Ovary (tissue), 10 donors: ENCODE measurements at regions of chr9 and their contacts with region 1.

Region 1: GRCh38 chr9:13291718-13292117 is 12.2 kb upstream of the MPDZ start:
- DNase-seq: no peak
- H3K4me3 ChIP-seq: no peak overlapping the region
- H3K27ac ChIP-seq: no peak overlapping the region
- H3K4me1 ChIP-seq: no peaks in the 10 kb centered on the region
- H3K27me3 ChIP-seq: no peaks in the 10 kb centered on the region
- CTCF ChIP-seq: no peak
- EP300 ChIP-seq: no peak
- POLR2A ChIP-seq: no peak

Region 2: GRCh38 chr9:13252852-13253251 is 38.9 kb before region 1 on chr9:
- intact Hi-C with region 1: loop called in 1 of 4 experiments (anchors 5 kb)
- DNase-seq: no peak
- H3K4me3 ChIP-seq: no peak overlapping the region
- H3K27ac ChIP-seq: no peak overlapping the region
- H3K4me1 ChIP-seq: no peaks in the 10 kb centered on the region
- H3K27me3 ChIP-seq: no peaks in the 10 kb centered on the region
- CTCF ChIP-seq: no peak
- EP300 ChIP-seq: no peak
- POLR2A ChIP-seq: no peak